Activated naive CD4-positive, alpha-beta T cell treated with anti-CD3 and anti-CD28 coated beads for 36 hours (primary cell): ENCODE measurements at regions of chr16 and their contacts with region 1.

Region 1: DNA sequence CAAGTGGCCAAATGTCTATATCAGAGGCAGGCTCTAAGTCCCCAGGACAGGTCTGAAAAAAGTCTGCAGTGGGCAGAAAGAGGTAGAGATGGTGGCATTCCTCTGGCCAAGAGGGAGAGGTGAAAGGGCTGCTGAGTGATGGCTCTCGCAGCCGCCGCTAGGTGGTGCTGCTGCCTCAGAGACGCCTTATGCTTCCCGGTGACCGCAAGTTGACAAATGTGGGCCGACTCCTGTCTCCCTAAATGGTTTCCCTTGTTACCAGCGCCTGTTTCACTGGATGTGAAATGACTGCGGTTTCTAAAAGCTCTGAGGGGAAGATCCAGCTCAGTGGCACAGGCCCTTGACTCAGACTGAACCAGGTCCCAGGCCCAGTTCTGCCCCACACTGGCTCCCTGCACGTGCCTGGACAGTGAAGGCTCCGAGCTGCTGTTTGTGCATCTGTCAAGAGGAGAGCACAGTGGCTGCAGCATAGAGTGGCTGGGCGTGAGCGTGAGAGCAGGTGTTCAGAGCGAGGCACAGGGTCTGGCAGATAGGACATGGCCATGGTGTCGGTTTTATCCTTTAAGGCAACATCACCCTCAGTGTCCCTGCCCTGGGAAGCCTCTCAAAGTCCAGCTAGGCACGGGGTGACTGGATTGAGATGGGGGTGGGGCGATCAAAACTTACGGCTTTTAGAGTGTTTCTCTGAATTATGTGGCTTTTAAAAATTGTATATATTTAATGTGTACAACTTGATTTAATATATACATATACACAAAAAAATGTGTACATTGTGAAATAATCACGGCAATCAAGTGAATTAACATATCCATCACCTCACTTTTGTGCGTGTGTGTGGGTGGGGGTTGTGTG is 19.9 kb downstream of the CLEC16A start:
- DNase-seq: peak; percentile 92
- H3K4me3 Mint-ChIP-seq: peak overlapping the region; percentile 43
- H3K27ac Mint-ChIP-seq: peak overlapping the region; percentile 92
- H3K4me1 Mint-ChIP-seq: peaks cover 39% of the 10 kb centered on the region
- H3K27me3 Mint-ChIP-seq: no peaks in the 10 kb centered on the region

Region 2: GRCh38 chr16:10616730-10617555 is 347.3 kb before region 1 on chr16:
- CTCF ChIA-PET with region 1: no interaction called
- intact Hi-C with region 1: no loop called
- DNase-seq: no peak
- H3K4me3 Mint-ChIP-seq: no peak overlapping the region
- H3K27ac Mint-ChIP-seq: no peak overlapping the region
- H3K4me1 Mint-ChIP-seq: peaks cover 4% of the 10 kb centered on the region
- H3K27me3 Mint-ChIP-seq: peaks cover 20% of the 10 kb centered on the region

Region 3: GRCh38 chr16:10906914-10907756 is 57.1 kb before region 1 on chr16:
- CTCF ChIA-PET with region 1: no interaction called
- intact Hi-C with region 1: no loop called
- DNase-seq: no peak
- H3K4me3 Mint-ChIP-seq: no peak overlapping the region
- H3K27ac Mint-ChIP-seq: no peak overlapping the region
- H3K4me1 Mint-ChIP-seq: no peaks in the 10 kb centered on the region
- H3K27me3 Mint-ChIP-seq: no peaks in the 10 kb centered on the region

Region 4: GRCh38 chr16:10981697-10982216 is 17.5 kb after region 1 on chr16:
- CTCF ChIA-PET with region 1: interaction called, 31 read pairs
- intact Hi-C with region 1: no loop called
- DNase-seq: peak; percentile 76
- H3K4me3 Mint-ChIP-seq: no peak overlapping the region
- H3K27ac Mint-ChIP-seq: no peak overlapping the region
- H3K4me1 Mint-ChIP-seq: peaks cover 36% of the 10 kb centered on the region
- H3K27me3 Mint-ChIP-seq: no peaks in the 10 kb centered on the region

Region 5: DNA sequence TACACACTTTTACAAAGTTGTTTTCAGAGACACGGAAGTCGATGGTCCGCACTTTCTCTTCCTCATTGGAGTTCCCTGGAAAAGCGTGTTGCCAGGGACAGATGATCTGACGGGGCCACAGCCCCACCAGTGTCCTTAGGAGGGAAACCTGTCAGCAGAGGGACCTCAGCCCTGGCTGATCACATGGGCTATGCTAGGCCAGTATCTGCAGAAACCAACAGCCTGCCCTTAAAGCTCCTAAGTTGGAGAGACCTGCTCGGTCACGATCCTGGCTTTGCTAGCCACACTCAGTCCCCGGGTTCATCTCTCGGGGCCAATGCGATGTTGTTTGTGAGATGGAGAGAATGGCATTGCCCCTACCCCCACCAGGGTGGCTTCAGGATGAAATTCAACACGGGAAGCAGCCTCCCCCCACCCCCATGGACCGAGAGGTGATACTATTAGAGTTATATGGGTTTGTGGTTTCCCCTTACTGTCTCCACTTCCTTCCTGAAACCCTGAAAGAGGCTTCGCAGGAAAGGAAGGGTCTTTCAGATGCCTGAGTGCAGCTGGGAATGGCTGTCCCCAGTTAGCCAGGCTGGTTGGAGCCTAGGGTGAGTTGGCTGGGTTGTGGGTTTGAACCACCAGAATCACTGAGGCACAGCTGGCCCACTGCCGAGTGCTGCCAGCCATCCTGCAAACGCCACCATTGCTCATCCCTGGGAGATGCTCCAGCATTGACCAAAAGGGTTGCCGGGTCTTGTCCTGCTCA is 397.6 kb after region 1 on chr16:
- CTCF ChIA-PET with region 1: interaction called, 16 read pairs
- intact Hi-C with region 1: loop called (anchors 1 kb)
- DNase-seq: peak; percentile 76
- H3K4me3 Mint-ChIP-seq: peak overlapping the region; percentile 48
- H3K27ac Mint-ChIP-seq: peak overlapping the region; percentile 21
- H3K4me1 Mint-ChIP-seq: peaks cover 52% of the 10 kb centered on the region
- H3K27me3 Mint-ChIP-seq: no peaks in the 10 kb centered on the region

Region 6: DNA sequence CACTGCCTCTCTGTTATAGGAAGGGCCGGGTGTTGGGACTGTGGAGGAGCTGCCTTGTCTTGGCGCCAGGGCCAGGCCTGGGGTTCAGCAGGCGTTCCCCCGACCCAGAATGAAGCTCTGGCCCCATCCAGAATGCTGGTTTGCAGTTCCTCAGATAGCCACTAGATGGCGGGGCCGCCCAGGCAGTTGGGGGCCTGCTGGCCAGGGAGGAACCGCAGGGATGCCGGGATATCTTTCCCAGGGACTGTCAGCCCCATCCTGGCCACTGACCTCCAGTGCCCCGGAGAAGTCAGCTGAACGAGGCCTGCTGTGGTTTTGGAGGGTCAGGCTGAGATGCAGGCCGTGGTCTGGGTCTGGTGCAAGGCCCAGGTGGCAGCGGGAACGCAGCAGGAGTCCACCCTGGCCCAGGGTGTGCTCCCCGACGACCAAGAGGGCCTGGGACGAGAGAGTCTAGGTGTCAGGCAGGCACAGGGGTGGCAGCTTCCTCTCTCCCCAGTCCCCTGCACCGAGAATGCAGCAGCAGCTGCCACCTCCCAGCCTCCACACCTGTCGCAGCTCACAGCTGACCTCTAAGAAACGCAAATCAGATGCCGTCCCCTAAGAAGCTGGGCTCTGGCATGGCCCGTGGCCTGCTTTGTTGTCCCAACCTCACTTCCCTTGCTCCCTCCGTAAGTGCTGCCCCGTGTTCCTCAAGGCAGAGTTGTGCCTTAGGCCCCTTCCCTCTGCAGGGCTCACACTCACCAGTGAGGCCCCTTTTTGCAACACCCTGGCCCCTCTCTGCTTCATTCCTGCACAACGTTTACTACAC is 432.2 kb after region 1 on chr16:
- CTCF ChIA-PET with region 1: interaction called, 17 read pairs
- intact Hi-C with region 1: loop called (anchors 2 kb)
- DNase-seq: peak; percentile 77
- H3K4me3 Mint-ChIP-seq: no peak overlapping the region
- H3K27ac Mint-ChIP-seq: no peak overlapping the region
- H3K4me1 Mint-ChIP-seq: no peaks in the 10 kb centered on the region
- H3K27me3 Mint-ChIP-seq: no peaks in the 10 kb centered on the region

Region 7: DNA sequence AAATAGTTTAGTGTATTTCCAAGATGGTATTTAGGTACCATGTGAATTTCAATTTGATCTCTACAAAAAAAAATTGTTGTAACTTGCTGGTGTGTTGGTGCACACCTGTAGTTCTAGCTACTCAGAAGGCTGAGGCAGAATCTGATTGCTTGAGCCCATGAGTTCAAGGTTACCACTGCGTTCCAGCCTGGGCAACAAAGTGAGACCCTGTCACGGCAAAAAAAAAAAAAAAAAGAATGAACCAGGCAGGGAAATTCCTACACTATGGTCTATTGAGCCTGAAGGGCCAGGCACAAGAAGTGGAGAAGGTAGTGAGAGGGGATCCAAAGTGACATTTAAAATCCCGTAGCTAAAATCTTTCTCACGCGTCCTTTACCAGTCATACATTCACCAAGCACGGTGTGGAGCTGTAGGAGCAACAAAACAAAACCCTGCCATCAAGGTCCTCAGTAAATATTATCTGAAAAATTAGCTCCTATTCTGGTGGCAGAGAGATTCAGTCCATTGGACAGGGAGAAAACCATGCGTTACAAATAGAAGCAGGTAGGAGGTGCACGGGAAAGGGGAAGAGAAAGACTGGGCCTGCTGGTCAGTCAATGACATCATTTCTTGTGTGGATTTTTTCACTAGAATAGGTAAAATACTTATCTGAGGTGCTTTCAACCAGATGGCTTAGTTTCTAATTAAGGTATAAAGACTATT is 751.1 kb after region 1 on chr16:
- CTCF ChIA-PET with region 1: interaction called, 12 read pairs
- intact Hi-C with region 1: no loop called
- DNase-seq: no peak
- H3K4me3 Mint-ChIP-seq: no peak overlapping the region
- H3K27ac Mint-ChIP-seq: no peak overlapping the region
- H3K4me1 Mint-ChIP-seq: peaks cover 6% of the 10 kb centered on the region
- H3K27me3 Mint-ChIP-seq: no peaks in the 10 kb centered on the region